ENCODE measurements at regions of chr17 and their contacts with region 1.

Region 1: GRCh38 chr17:8900626-8901585 is 33.4 kb upstream of the PIK3R6 start:
- DNase-seq: peak; percentile 84
- ATAC-seq: peak; percentile 60
- H3K4me3 ChIP-seq: peak overlapping the region; percentile 6; the same call in 1 of the 2 replicates
- H3K27ac ChIP-seq: peak overlapping the region; percentile 86
- H3K4me1 ChIP-seq: peaks cover 60% of the 10 kb centered on the region
- H3K27me3 ChIP-seq: no peaks in the 10 kb centered on the region
- CTCF ChIP-seq: peak; percentile 16 to 18 (median 17); a peak in 2 of 6 replicates
- EP300 ChIP-seq: peak; percentile 84 to 97
- POLR2A ChIP-seq: peak; percentile 51; the same call in 1 of the 2 replicates
- RAD21 ChIP-seq: peak; percentile 11

Region 2: GRCh38 chr17:8785547-8786413 is 115.1 kb before region 1 on chr17:
- CTCF ChIA-PET with region 1: interaction called, 55 read pairs
- POLR2A ChIA-PET with region 1: no interaction called
- RAD21 ChIA-PET with region 1: interaction called, 3 read pairs
- SMC1A ChIA-PET with region 1: interaction called, 14 read pairs
- in situ Hi-C with region 1: no loop called
- intact Hi-C with region 1: loop called (anchors 5 kb)
- DNase-seq: no peak
- ATAC-seq: peak; percentile 89
- H3K4me3 ChIP-seq: no peak overlapping the region
- H3K27ac ChIP-seq: no peak overlapping the region
- H3K4me1 ChIP-seq: no peaks in the 10 kb centered on the region
- H3K27me3 ChIP-seq: no peaks in the 10 kb centered on the region
- CTCF ChIP-seq: peak; percentile 64 to 87 (median 84)
- EP300 ChIP-seq: no peak
- POLR2A ChIP-seq: no peak
- RAD21 ChIP-seq: peak; percentile 75

Region 3: DNA sequence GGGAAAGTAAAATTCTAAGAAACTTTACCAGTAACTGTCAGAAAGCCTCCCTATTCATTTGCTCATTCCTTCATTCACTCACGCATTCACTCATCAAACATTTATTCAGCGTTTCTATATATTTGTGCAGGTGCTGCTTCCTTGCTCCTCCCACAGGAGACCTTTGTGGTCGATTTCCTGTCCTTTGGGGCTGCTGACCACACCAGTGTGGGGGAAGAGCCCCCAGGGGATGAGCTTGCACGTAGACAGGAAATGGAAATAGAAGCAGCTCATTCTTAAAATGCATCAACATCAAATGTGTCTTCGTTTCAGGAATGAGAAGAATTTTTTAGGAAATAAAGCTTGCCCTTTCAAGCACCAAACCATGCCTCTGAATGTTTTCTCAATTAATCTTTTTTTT is 43.0 kb before region 1 on chr17:
- CTCF ChIA-PET with region 1: interaction called, 28 read pairs
- POLR2A ChIA-PET with region 1: interaction called, 74 read pairs
- RAD21 ChIA-PET with region 1: interaction called, 92 read pairs
- SMC1A ChIA-PET with region 1: interaction called, 64 read pairs
- in situ Hi-C with region 1: no loop called
- intact Hi-C with region 1: no loop called
- DNase-seq: peak; percentile 95
- ATAC-seq: peak; percentile 40
- H3K4me3 ChIP-seq: peak overlapping the region; percentile 57; the same call in 1 of the 2 replicates
- H3K27ac ChIP-seq: peak overlapping the region; percentile 99
- H3K4me1 ChIP-seq: peaks cover 60% of the 10 kb centered on the region
- H3K27me3 ChIP-seq: no peaks in the 10 kb centered on the region
- CTCF ChIP-seq: no peak
- EP300 ChIP-seq: peak; percentile 98 to 99
- POLR2A ChIP-seq: no peak
- RAD21 ChIP-seq: peak; percentile 12; the same call in 1 of the 2 replicates

Region 4: DNA sequence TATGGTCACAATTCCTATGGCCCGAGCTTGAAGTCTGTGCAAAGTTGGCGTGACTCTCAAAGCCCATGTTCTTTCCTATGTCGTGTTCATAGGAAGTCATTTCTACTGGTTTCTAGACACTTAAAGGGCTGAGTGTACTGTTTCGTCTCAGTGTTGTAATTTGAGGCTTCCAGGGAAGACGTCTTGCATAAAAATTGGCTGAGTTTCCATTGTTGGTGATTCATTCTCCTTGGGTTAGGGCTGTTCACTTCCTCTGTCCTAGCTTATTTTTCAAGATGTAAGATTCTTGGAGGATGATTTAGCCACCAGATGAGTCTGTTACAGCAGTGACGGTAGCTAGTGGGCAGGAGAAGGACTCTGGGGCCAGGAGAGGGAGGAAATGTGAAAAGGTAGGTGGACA is 21.5 kb after region 1 on chr17:
- CTCF ChIA-PET with region 1: interaction called, 8 read pairs
- POLR2A ChIA-PET with region 1: interaction called, 7 read pairs
- RAD21 ChIA-PET with region 1: interaction called, 10 read pairs
- SMC1A ChIA-PET with region 1: interaction called, 47 read pairs
- in situ Hi-C with region 1: no loop called
- intact Hi-C with region 1: no loop called
- DNase-seq: no peak
- ATAC-seq: no peak
- H3K4me3 ChIP-seq: no peak overlapping the region
- H3K27ac ChIP-seq: no peak overlapping the region
- H3K4me1 ChIP-seq: peaks cover 50% of the 10 kb centered on the region
- H3K27me3 ChIP-seq: no peaks in the 10 kb centered on the region
- CTCF ChIP-seq: no peak
- EP300 ChIP-seq: no peak
- POLR2A ChIP-seq: no peak
- RAD21 ChIP-seq: no peak

Region 5: GRCh38 chr17:8949061-8949661 is 48.3 kb after region 1 on chr17:
- CTCF ChIA-PET with region 1: interaction called, 13 read pairs
- POLR2A ChIA-PET with region 1: interaction called, 9 read pairs
- RAD21 ChIA-PET with region 1: interaction called, 20 read pairs
- SMC1A ChIA-PET with region 1: interaction called, 27 read pairs
- in situ Hi-C with region 1: no loop called
- intact Hi-C with region 1: no loop called
- DNase-seq: no peak
- ATAC-seq: peak; percentile 78
- H3K4me3 ChIP-seq: peak overlapping the region; percentile 45; the same call in 1 of the 2 replicates
- H3K27ac ChIP-seq: peak overlapping the region; percentile 62
- H3K4me1 ChIP-seq: peaks cover 58% of the 10 kb centered on the region
- H3K27me3 ChIP-seq: no peaks in the 10 kb centered on the region
- CTCF ChIP-seq: no peak
- EP300 ChIP-seq: peak in 1 of 2 experiments; percentile 30; a peak in 1 of 4 replicates
- POLR2A ChIP-seq: no peak
- RAD21 ChIP-seq: no peak

Region 6: DNA sequence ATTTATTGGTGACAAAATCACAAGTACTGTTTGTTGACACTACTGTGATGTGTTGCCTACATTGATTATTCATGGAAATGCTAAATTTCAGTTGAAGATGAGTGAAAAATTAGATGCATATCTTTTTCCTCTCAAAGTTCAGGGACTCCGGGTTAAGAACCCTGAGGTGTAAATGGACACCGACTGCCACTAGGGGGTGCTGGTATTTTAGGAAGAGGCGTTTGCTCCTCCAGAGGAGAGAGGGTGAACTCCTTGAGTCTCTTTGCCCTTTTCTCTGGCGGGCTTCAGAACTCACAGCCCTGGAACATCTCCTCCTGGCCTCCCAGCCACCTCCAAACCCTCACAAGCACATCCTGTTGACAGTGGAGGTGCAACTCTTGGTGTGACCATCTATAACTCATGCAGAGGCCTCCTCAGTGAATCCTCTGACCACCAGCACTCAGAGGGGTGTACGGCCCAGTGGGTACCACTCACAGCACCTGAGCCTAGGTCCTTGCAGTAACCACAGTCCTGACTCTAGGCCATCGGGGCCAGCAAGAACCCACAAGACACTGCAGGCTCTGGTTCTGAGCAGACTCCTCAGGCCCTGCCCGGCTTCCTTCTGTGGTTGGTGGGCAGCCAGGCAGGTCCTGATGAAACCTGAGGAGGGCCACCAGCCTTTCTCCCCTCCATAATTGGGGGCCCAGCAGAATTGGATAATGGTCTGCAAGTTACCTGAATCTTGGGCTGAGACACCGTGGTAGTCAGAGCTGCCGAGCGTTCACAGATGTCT is 90.8 kb after region 1 on chr17:
- CTCF ChIA-PET with region 1: interaction called, 162 read pairs
- POLR2A ChIA-PET with region 1: interaction called, 4 read pairs
- RAD21 ChIA-PET with region 1: interaction called, 52 read pairs
- SMC1A ChIA-PET with region 1: interaction called, 37 read pairs
- in situ Hi-C with region 1: no loop called
- intact Hi-C with region 1: no loop called
- DNase-seq: no peak
- ATAC-seq: peak; percentile 74
- H3K4me3 ChIP-seq: no peak overlapping the region
- H3K27ac ChIP-seq: no peak overlapping the region
- H3K4me1 ChIP-seq: peaks cover 12% of the 10 kb centered on the region
- H3K27me3 ChIP-seq: no peaks in the 10 kb centered on the region
- CTCF ChIP-seq: peak; percentile 38 to 77 (median 71)
- EP300 ChIP-seq: no peak
- POLR2A ChIP-seq: no peak
- RAD21 ChIP-seq: peak; percentile 57

Measured in GM12878 (cell line).